Activated CD4-positive, alpha-beta T cell treated with anti-CD3 and anti-CD28 coated beads for 36 hours (primary cell): ENCODE measurements at regions of chr7 and their contacts with region 1.

Region 1: DNA sequence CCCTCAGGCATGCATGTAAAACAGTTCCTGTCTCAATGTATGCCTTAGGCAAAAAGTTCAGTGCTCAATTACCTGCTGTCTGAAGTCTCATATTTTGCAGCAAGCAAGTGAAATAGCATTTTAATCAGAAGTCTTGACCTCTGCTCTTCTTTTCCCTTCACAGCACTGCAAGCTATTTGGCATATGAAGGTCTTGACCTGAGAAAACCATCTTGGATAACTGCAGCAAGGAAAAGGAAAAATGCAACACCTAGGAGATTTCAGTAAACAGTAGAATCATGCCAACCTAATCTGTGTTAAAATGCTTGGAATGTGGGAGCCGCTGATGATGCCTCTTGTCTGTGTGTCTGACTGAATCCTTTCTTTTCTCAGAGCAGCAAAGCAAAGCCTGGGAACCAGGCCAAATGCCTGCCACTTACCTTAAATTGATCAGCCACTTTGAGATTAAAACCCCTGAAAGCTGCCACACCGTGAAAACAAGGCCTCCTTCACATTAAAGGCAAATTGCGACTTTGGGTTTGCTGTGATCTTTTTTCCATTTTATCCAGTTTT is 80.4 kb upstream of the CDK6 start:
- DNase-seq: no peak
- ATAC-seq: no peak
- H3K4me3 Mint-ChIP-seq: no peak overlapping the region
- H3K27ac Mint-ChIP-seq: no peak overlapping the region
- H3K4me1 Mint-ChIP-seq: peaks cover 2% of the 10 kb centered on the region
- H3K27me3 Mint-ChIP-seq: peaks cover 7% of the 10 kb centered on the region

Region 2: GRCh38 chr7:92809397-92810241 is 107.1 kb before region 1 on chr7:
- CTCF ChIA-PET with region 1: no interaction called
- POLR2A ChIA-PET with region 1: no interaction called
- intact Hi-C with region 1: no loop called
- DNase-seq: peak; percentile 75
- ATAC-seq: peak; percentile 56
- H3K4me3 Mint-ChIP-seq: peak overlapping the region; percentile 50
- H3K27ac Mint-ChIP-seq: peak overlapping the region; percentile 83
- H3K4me1 Mint-ChIP-seq: peaks cover 81% of the 10 kb centered on the region
- H3K27me3 Mint-ChIP-seq: no peaks in the 10 kb centered on the region

Region 3: DNA sequence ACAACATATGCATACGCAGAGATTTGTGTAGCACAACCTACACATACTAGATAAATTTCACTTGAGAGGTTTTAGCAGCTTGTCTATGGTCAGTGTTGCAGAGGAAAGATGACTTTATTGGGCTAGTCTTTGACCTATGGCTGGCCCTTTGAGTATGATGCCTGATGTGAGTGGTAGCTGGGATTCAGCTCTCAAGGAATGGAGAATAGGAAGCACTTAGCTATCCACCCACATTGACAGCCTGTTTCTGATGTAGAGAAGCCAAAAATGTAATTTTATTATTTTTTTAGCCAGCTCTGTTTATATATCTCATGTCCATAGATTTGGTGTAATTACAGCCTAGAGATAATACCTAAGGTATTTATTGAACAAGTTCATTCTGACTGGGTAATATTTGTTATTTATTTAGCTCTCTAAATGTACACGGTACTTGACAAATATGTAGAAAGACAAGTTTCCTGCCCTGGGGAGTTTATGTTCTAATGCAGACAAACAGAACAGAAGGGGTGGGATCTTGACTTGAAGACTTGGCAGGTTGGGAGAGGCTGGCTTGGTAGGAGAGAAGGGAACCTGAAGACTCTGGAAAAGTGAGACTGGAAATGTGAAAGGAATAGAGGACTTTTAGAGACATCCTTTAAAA is 17.2 kb after region 1 on chr7:
- CTCF ChIA-PET with region 1: interaction called, 6 read pairs
- POLR2A ChIA-PET with region 1: interaction called, 13 read pairs
- intact Hi-C with region 1: no loop called
- DNase-seq: no peak
- ATAC-seq: no peak
- H3K4me3 Mint-ChIP-seq: no peak overlapping the region
- H3K27ac Mint-ChIP-seq: no peak overlapping the region
- H3K4me1 Mint-ChIP-seq: no peaks in the 10 kb centered on the region
- H3K27me3 Mint-ChIP-seq: peaks cover 14% of the 10 kb centered on the region